ENCODE measurements at regions of chr2 and their contacts with region 1.

Region 1: GRCh38 chr2:172596776-172597175 is 40.9 kb downstream of the PDK1 start:
- DNase-seq: no peak
- ATAC-seq: no peak
- H3K4me3 Mint-ChIP-seq: no peak overlapping the region
- H3K27ac Mint-ChIP-seq: no peak overlapping the region
- H3K4me1 Mint-ChIP-seq: peaks cover 5% of the 10 kb centered on the region
- H3K27me3 Mint-ChIP-seq: no peaks in the 10 kb centered on the region

Region 2: GRCh38 chr2:172366596-172367150 is 230.1 kb before region 1 on chr2:
- CTCF ChIA-PET with region 1: no interaction called
- POLR2A ChIA-PET with region 1: no interaction called
- intact Hi-C with region 1: no loop called
- DNase-seq: no peak
- ATAC-seq: no peak
- H3K4me3 Mint-ChIP-seq: no peak overlapping the region
- H3K27ac Mint-ChIP-seq: no peak overlapping the region
- H3K4me1 Mint-ChIP-seq: no peaks in the 10 kb centered on the region
- H3K27me3 Mint-ChIP-seq: no peaks in the 10 kb centered on the region

Region 3: DNA sequence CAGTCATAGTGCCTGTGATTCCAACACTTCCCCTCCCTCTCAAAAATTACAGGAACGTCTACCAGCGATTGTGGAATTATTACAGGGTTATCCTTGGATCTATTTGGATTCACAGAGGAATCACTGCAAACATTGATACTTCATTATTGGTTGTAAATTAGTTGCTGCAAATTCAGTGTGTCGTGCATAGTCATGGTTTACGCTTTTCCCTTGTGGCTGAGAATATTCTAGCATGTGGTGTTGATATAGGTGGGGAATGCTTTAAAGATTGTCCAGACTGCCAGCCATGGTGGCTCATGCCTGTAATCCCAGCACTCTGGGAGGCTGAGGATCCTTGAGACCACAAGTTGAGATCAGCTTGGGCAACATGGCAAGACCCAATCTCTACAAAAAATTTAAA is 89.6 kb before region 1 on chr2:
- CTCF ChIA-PET with region 1: no interaction called
- POLR2A ChIA-PET with region 1: no interaction called
- intact Hi-C with region 1: no loop called
- DNase-seq: no peak
- ATAC-seq: no peak
- H3K4me3 Mint-ChIP-seq: no peak overlapping the region
- H3K27ac Mint-ChIP-seq: no peak overlapping the region
- H3K4me1 Mint-ChIP-seq: peaks cover 21% of the 10 kb centered on the region
- H3K27me3 Mint-ChIP-seq: no peaks in the 10 kb centered on the region

Region 4: DNA sequence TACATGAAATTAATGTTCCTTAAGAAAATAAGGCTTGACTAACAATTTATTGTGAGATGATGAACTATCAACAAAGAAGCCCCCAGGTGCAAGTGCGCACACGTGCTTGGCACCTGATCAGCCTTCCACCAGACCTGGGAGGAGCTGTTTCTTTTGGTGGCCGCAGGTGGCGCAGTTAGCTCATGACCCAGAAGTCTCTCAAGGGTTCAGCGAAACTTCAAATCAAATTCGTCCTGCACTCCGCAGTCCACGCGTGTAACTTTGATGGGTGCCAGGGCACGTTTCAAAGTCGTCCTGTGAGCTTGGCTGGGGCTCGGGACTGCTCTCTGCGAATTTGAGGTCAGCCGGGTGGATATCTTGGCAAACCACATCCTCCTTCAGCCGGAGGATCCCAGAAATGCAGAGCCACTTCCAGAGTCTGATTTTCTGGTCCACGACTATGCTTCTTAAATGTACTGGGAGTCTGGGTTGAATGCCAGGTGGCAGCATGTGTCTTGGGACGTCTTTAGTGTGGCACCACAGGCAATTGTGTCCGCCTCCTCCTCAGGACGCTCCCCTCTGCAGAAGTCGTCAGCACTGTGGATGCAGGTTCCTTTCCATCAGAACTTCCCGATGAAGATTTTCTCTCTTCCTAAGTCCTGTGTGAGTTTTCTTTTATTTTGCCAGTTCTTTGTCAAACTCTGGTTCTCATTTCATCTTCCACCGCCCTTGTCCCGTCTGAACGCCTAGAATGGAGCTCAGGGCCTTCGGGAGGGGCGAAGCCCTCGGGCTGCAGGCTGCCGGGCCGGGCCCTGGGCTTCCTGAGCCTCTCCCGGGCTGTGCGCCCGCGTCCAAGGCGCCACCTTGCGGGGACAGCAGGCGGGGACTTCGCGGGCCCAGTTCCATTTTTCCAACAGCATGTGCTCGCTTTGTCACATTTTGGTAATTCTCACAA is 77.5 kb after region 1 on chr2:
- CTCF ChIA-PET with region 1: interaction called, 4 read pairs
- POLR2A ChIA-PET with region 1: no interaction called
- intact Hi-C with region 1: loop called (anchors 5 kb)
- DNase-seq: peak; percentile 64
- ATAC-seq: peak; percentile 79
- H3K4me3 Mint-ChIP-seq: no peak overlapping the region
- H3K27ac Mint-ChIP-seq: no peak overlapping the region
- H3K4me1 Mint-ChIP-seq: peaks cover 6% of the 10 kb centered on the region
- H3K27me3 Mint-ChIP-seq: peaks cover 3% of the 10 kb centered on the region

Region 5: DNA sequence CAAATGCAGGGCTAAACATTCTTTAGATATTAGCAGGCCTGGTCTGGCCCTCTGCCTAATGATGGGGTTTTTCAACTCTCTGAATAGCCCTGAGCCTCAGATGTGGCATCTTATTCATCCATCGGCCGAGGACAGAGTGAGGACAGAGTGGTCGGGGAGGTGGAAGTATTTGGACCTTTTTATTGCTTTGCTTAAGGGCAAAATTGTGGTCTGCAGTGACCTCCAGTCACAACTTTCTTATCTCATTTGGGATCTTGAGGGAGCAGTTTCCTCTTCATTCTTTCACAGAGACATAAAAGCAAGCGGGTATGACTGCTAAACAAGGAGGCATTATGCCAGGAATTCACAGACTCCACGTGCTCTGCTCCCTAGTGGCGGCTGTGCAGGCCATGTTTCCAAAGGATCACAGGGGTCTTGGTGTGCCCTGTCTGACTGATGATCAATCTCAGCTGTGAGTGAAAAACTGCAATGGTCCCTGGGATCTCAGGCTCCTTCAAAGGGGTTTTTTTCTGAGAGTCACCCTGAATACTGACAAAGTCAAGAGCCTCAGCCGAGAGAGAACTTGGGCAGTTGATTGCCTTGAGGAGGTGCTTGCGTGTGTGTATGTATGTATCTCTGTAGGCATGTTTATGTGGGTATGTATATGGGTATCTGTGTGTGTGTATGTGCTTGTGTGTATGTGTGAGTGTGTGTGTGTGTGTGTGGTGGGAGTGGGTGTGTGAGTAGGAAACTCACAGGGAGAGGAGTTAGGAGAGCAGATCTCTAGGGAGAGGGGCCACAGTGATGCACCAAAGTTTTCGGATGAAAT is 186.5 kb after region 1 on chr2:
- CTCF ChIA-PET with region 1: no interaction called
- POLR2A ChIA-PET with region 1: no interaction called
- intact Hi-C with region 1: no loop called
- DNase-seq: no peak
- ATAC-seq: no peak
- H3K4me3 Mint-ChIP-seq: no peak overlapping the region
- H3K27ac Mint-ChIP-seq: no peak overlapping the region
- H3K4me1 Mint-ChIP-seq: no peaks in the 10 kb centered on the region
- H3K27me3 Mint-ChIP-seq: peaks cover 9% of the 10 kb centered on the region